ENCODE measurements at regions of chr17 and their contacts with region 1.

Region 1: DNA sequence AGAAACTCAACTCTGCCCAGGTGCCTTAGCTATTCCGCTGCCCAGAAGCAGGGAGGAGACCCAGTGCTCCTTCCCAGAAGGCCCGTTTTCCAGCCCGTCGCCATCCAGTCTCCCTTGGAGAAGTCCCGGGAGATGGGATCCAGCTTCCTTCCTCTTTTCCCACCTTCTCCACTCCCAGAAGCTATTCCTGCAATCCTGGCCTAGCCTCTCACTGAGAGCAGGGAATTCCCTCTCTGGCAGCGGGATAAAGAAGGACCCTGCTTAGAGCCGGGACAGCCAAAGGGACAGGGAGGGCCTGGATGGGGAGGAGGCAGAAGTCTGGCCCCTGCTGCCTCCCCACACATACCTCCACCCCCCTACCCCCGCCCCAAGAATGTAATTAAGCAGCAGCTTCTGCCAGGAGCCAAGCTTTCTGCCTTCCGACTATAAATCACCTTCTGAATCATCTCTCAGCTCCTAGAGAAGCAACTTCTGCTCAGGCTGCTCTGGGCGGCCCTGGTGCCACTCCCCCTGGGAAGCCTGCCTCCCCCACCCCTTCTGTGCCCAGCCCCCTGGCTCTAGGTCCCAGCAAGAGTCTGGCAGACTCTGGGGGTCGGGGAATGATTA is 6.4 kb downstream of the WNT3 start:
- DNase-seq: no peak
- ATAC-seq: peak in 1 of 2 experiments; percentile 44; a peak in 3 of 6 replicates
- H3K4me3 ChIP-seq: no peak overlapping the region
- H3K27ac ChIP-seq: peak overlapping the region in 1 of 2 experiments; percentile 6; a peak in 1 of 6 replicates
- H3K4me1 ChIP-seq: 0 out of 3 replicates have a peak, but pooled peaks cover 7% of the 10 kb centered on the region
- CTCF ChIP-seq: no peak
- EP300 ChIP-seq: no peak
- POLR2A ChIP-seq: no peak
- RAD21 ChIP-seq: no peak

Region 2: DNA sequence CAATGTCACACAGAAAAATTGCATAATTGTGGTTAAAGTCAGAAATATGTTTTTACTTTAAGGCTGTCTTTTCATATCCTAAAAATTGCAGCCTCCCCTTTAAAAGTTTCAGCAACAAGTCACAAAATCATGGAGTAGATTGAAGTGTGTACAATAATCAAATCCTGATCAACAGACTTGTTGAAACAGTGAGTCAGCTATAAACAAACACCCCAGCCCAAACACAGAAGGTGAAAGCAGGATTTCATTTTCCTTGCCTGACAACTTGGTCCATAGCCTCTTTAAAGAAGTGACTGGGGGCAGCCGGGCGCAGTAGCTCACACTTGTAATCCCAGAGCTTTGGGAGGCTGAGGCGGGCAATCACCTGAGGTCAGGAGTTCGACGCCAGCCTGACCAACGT is 53.5 kb before region 1 on chr17:
- CTCF ChIA-PET with region 1: no interaction called
- POLR2A ChIA-PET with region 1: no interaction called
- DNase-seq: peak in 1 of 2 experiments; percentile 51
- ATAC-seq: peak; percentile 62 to 84; a peak in 4 of 6 replicates
- H3K4me3 ChIP-seq: no peak overlapping the region
- H3K27ac ChIP-seq: peak overlapping the region in 1 of 2 experiments; percentile 55; a peak in 3 of 6 replicates
- H3K4me1 ChIP-seq: peaks cover 26% of the 10 kb centered on the region
- CTCF ChIP-seq: no peak
- EP300 ChIP-seq: no peak
- POLR2A ChIP-seq: no peak
- RAD21 ChIP-seq: 0 out of 5 replicates have a peak, but pooled peaks of 1 of the 2 experiments have one; percentile 8

Region 3: GRCh38 chr17:46822388-46822921 is 10.4 kb after region 1 on chr17:
- CTCF ChIA-PET with region 1: interaction called, 22 read pairs
- POLR2A ChIA-PET with region 1: no interaction called
- DNase-seq: peak in 1 of 2 experiments; percentile 45
- ATAC-seq: peak; percentile 19 to 70; a peak in 4 of 6 replicates
- H3K4me3 ChIP-seq: 0 out of 3 replicates have a peak overlapping the region, but pooled peaks have one; percentile 16
- H3K27ac ChIP-seq: peak overlapping the region in 1 of 2 experiments; percentile 44; a peak in 1 of 6 replicates
- H3K4me1 ChIP-seq: no peaks in the 10 kb centered on the region
- CTCF ChIP-seq: peak; percentile 91
- EP300 ChIP-seq: no peak
- POLR2A ChIP-seq: no peak
- RAD21 ChIP-seq: peak; percentile 71 to 75

Measured in A549 (cell line).